ENCODE measurements at regions of chr5 and their contacts with region 1.

Region 1: GRCh38 chr5:94111209-94112004 is 370.0 kb upstream of the POU5F2 start:
- DNase-seq: peak; percentile 97
- H3K4me3 ChIP-seq: peak overlapping the region; percentile 70 to 92 (median 76)
- H3K27ac ChIP-seq: peak overlapping the region; percentile 89 to 90 (median 90)
- H3K4me1 ChIP-seq: peaks cover 0 to 14% (median 10%) of the 10 kb centered on the region in 4 donors
- H3K27me3 ChIP-seq: no peaks in the 10 kb centered on the region
- CTCF ChIP-seq: peak in 1 of 4 experiments; percentile 9
- EP300 ChIP-seq: peak in 1 of 4 donors; percentile 57
- POLR2A ChIP-seq: peak; percentile 42 to 55

Region 2: GRCh38 chr5:93995126-93995621 is 116.2 kb before region 1 on chr5:
- intact Hi-C with region 1: no loop called
- DNase-seq: no peak
- H3K4me3 ChIP-seq: no peak overlapping the region
- H3K27ac ChIP-seq: no peak overlapping the region
- H3K4me1 ChIP-seq: peaks cover 0 to 17% (median 3%) of the 10 kb centered on the region in 4 donors
- H3K27me3 ChIP-seq: no peaks in the 10 kb centered on the region
- CTCF ChIP-seq: no peak
- EP300 ChIP-seq: no peak
- POLR2A ChIP-seq: no peak

Region 3: DNA sequence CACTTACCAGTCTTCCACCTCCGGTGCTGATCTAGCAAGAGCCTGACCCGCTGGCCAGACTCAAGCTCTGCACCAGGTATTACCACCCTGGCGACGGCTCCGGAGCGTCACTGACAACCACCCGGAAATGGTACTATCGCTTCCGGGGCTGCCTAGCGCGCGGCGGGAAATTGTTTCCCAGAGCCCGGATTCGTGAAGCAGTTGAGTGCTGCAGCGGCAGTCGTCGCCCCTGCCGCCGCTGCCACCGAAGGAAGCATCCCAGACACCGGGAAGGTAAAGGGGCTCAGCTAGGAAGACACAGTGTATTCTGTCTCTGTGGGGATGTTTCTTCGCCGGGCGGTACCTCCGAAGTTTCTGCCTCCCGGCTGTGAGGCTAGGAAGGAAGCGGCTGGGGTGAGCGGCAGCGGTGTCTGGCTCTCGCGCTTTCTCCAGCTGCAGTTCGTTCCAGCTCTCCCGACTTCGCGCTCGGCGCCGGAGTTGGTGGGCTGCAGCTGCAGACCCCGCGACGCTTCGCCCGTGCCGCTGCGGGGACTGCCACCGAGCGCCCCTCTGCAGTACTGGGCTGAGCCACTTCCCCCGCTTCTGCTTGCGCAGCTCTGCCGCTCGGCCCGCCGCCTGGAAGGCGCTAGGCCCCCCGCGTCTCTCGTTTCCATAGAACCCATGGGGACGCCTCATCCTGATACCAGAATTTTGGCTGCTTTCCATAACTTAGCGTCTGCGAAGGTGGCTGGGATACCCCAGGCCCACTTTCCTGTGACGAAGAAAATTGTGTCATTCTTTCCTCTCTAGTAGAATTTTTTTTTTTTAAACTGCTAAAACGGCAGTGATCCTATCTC is 507.3 kb after region 1 on chr5 and contains the starts of genes KIAA0825 and SLF1:
- intact Hi-C with region 1: loop called (anchors 5 kb)
- DNase-seq: peak; percentile 91
- H3K4me3 ChIP-seq: peak within 1 kb of the TSS; percentile 58 to 85 (median 74)
- H3K27ac ChIP-seq: peak within 1 kb of the TSS; percentile 74 to 82 (median 78)
- H3K4me1 ChIP-seq: peaks cover 0 to 20% (median 13%) of the 10 kb centered on the region in 4 donors
- H3K27me3 ChIP-seq: no peaks in the 10 kb centered on the region
- CTCF ChIP-seq: no peak
- EP300 ChIP-seq: no peak
- POLR2A ChIP-seq: peak in 1 of 2 donors; percentile 10
- total RNA-seq, gene KIAA0825: 2.9 to 4.6 (median 4.1) TPM
- total RNA-seq, gene SLF1: 2.6 to 8.6 (median 6.8) TPM